Activated T-helper 2 cell treated with anti-CD3 and anti-CD28 coated beads, Interferon-gamma antibody, Interleukin-2, Interleukin-4, amounts not matched to agents 10 μg/mL and 5 μg/mL and 100 μg/mL, durations not matched to agents 14 hours and 24 hours and 36 hours (primary cell): ENCODE measurements at regions of chr16 and their contacts with region 1.

Region 1: DNA sequence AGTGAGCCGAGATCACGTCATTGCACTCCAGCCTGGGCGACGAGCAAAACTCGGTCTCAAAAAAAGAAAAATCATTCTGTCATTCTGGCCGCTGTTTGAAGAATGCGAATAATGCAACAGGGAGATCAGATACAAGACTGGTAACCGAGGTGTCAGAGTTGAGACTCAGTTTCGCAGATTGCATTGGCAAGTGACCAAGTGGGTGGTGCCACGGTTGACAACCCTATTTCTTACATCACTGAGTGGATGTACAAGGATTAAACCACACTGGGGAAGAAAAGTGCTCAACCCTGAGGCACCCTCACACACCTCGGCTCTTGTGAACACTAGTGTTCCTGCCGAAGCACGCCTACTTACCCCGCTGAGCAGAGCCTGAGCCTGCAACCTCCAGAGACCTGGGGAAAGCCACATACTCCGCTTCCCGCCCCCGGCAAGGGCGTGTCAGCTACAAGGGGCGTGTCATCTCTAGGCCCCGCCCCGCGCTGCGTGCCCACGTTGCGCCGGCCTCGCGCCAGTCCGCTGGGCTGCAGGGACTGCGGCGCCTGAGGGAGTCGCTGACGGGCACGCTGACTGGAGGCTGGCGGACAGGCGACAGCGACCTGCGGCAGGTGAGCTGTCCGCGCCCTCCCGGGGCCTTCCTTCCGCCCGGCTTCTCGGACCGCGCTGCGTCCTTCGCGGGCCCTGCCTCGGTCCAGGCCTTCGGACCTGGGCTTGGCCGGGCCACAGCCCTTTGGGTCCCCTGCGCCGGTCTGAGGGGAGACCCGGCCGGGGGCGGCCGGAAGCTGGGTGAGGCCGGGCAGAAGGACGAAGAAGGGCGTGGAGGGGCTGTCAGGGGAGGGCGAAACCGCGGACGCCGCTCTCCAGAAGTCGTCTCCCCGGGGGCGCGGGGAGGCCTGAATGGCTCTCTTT is at the start of gene HMOX2:
- DNase-seq: peak; percentile 94
- H3K4me3 Mint-ChIP-seq: peak within 1 kb of the TSS; percentile 80
- H3K27ac Mint-ChIP-seq: peak within 1 kb of the TSS; percentile 84
- H3K4me1 Mint-ChIP-seq: peaks cover 19% of the 10 kb centered on the region
- H3K27me3 Mint-ChIP-seq: no peaks in the 10 kb centered on the region
- total RNA-seq, gene HMOX2: 70.2 and 75.2 TPM in 2 replicates

Region 2: DNA sequence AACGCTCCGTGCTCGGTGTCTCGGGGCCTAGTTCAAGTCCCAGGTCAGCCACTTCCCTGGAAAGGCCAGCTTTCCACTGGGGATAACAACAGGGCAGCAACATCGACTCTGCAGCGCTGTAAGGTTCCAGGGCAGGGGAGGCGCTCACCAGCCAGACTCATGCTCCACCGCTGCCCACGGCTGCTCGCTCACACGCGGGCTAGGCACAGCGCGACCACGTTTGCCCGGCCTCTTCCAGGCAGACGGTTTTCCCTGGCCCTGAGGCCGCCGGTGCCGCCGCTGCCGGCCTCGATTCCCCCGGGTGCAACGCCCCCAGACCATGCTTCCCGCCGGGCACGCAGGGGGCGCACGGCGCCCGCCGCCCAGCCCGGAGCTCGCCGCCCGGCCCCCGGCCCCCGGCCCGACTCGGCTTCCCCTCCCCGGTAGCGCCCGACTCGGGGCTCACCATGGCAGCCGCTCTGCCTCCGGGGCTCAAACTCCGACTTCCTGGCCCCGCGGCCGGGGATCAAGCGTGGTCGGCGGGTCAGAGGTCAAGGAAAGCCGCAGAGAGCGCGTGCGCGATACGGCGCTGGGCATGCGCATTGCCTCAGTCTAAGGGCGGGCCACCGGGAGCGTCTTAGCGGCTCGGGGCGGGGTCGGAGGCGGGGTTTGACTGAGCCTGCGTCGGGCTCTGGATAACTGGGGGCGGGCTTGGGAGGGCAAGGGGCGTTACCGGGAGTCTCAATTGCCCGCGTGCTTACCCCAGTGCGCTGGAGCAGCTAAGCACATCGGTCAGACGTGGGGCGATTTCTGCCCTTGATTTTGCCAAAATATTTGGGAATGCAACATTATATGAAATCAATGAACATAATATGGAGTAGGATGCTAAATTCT is 125.1 kb before region 1 on chr16 and contains the start of gene PAM16:
- intact Hi-C with region 1: loop called (anchors 5 kb)
- DNase-seq: peak; percentile 98
- H3K4me3 Mint-ChIP-seq: peak within 1 kb of the TSS; percentile 93
- H3K27ac Mint-ChIP-seq: peak within 1 kb of the TSS; percentile 88
- H3K4me1 Mint-ChIP-seq: peaks cover 4% of the 10 kb centered on the region
- H3K27me3 Mint-ChIP-seq: no peaks in the 10 kb centered on the region
- total RNA-seq, gene PAM16: 73.1 and 73.8 TPM in 2 replicates

Region 3: GRCh38 chr16:4416200-4417032 is 59.7 kb before region 1 on chr16 and contains the start of gene CORO7:
- intact Hi-C with region 1: loop called (anchors 2 kb)
- DNase-seq: peak; percentile 98
- H3K4me3 Mint-ChIP-seq: peak within 1 kb of the TSS; percentile 95
- H3K27ac Mint-ChIP-seq: peak within 1 kb of the TSS; percentile 88
- H3K4me1 Mint-ChIP-seq: peaks cover 27% of the 10 kb centered on the region
- H3K27me3 Mint-ChIP-seq: no peaks in the 10 kb centered on the region
- total RNA-seq, gene CORO7: 92.5 and 101 TPM in 2 replicates

Region 4: DNA sequence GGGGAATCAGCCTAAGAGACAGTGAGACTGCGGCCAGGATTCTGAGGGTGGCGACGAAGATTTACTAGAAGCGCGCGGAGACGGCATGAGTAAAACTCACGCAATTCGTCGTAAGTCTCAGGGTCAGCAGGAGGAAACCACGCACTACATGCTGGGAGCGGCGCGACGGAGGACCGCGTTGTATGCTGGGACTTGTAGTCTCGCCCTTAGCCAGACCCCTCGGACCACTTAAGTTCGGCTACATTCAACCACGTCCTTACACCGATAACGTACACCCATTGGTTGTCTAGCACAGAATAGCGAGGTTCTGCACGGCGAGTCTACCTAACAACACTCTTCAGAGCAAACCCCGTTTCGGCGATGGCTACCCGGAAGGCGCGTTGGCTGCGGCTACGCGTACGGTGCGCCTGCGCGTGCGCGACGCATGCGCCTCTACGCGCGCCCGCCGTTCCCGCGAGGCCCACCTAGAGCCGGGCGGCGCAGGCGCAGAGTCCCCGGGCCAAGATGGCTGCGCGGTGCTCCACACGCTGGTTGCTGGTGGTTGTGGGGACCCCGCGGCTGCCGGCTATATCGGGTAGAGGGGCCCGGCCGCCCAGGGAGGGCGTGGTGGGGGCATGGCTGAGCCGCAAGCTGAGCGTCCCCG is 50.6 kb before region 1 on chr16 and contains the start of gene DNAJA3:
- intact Hi-C with region 1: loop called (anchors 2 kb)
- DNase-seq: peak; percentile 91
- H3K4me3 Mint-ChIP-seq: peak within 1 kb of the TSS; percentile 98
- H3K27ac Mint-ChIP-seq: peak within 1 kb of the TSS; percentile 100
- H3K4me1 Mint-ChIP-seq: peaks cover 22% of the 10 kb centered on the region
- H3K27me3 Mint-ChIP-seq: no peaks in the 10 kb centered on the region
- total RNA-seq, gene DNAJA3: 77.1 and 88.4 TPM in 2 replicates

Region 5: DNA sequence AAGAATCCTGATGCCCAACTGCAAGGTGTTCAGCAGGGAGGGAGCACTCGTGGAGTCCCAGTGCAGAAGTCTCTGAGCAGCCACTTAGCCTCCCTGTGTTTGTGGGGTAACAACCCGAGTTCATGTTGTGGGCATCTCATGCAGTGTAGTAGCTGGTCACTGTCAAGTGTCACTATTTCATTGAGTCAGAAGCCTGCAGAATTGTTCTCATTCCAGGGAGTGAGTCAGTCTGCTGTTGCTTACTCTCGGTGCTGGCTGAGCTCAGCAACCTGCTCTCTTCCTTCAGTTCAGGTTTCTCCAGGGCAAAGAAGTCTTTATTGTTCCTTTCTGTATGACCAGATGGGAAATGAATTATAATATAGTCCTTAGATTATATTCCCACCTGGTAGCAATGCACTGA is 24.1 kb after region 1 on chr16:
- intact Hi-C with region 1: loop called (anchors 2 kb)
- DNase-seq: no peak
- H3K4me3 Mint-ChIP-seq: no peak overlapping the region
- H3K27ac Mint-ChIP-seq: no peak overlapping the region
- H3K4me1 Mint-ChIP-seq: peaks cover 50% of the 10 kb centered on the region
- H3K27me3 Mint-ChIP-seq: no peaks in the 10 kb centered on the region

Region 6: DNA sequence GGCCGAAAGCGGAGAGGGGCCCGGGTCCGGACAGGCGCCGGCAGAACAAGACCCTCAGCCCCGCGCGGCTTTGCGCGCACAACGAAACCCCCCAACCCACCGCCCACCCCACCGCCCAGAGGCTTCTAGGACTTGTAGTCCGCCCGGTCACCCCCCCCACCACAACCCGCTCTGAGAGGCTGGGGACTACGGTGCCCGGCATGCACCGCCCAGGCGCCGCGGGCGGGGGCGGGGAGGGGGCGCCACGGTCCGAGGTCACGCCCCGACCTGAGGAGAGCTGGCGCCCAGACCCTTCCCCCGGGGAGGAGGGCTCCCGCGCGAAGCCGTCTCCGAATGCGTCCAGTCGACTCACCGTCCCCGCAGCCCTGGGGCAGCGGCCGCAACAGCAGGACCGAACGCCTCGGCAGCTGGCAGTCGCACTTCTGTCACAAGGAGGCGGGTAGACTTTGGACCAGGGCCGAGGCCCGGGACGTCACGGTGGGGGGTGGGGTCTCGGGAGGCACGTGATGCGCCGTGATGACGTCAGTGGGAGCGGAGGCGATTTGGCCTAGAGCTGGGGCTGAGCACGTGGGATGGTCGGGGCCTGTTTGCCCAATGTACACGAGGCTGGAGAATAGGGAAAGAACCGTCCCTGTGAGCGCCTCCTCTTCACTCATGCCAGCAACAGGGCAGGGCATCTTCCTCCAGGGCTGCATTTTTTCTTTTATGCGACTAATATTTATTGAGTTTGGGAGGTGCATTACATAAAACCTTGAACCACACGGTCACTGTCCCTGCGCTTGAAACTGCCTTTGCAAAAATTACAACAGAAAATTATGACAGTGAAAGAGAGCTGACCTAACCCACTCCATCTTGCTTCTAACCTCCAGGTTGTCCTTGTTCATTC is 62.5 kb after region 1 on chr16 and contains the start of gene CDIP1:
- intact Hi-C with region 1: loop called (anchors 2 kb)
- DNase-seq: peak; percentile 87
- H3K4me3 Mint-ChIP-seq: peak within 1 kb of the TSS; percentile 80
- H3K27ac Mint-ChIP-seq: peak within 1 kb of the TSS; percentile 72
- H3K4me1 Mint-ChIP-seq: peaks cover 38% of the 10 kb centered on the region
- H3K27me3 Mint-ChIP-seq: no peaks in the 10 kb centered on the region
- total RNA-seq, gene CDIP1: 46.0 and 47.9 TPM in 2 replicates

Region 7: DNA sequence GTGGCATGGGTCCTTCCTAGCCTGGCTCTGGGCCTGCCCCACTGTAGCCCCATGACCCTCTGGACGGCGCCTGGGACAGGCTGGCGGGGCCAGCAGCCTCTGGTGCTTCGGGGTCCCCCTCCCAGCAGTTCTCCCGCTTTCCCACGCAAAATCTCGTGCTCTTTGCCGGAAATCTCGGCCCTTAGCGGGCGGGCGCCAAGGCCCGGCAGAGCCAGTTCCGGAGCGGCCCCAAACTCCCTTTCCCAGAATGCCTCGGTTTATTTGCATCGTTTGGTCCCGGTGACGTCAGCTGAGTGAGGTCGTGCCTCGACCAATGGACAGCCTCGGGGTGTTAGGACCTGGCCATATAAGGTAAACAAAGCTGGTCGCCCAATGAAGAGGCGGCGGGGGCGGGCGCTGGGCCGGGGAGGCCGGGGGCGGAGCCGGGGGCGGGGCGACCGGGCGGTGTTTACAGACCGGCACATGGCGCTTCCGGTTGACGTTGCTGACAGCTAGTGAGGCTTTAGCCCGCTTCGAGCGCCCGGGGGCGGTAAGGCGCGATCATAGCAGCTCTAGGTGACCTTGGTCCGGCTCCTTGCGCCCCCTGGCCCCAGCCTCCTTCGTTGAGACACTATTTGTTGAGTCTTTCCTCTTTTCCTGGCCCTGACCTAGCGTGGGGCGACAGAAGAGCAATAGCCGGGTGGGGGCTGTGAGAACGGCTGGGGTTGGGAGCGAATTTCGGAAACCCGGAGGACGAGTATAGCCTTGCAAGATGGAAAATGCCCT is 140.1 kb after region 1 on chr16:
- intact Hi-C with region 1: loop called (anchors 5 kb)
- DNase-seq: peak; percentile 99
- H3K4me3 Mint-ChIP-seq: peak overlapping the region; percentile 92
- H3K27ac Mint-ChIP-seq: peak overlapping the region; percentile 98
- H3K4me1 Mint-ChIP-seq: peaks cover 16% of the 10 kb centered on the region
- H3K27me3 Mint-ChIP-seq: no peaks in the 10 kb centered on the region

Region 8: DNA sequence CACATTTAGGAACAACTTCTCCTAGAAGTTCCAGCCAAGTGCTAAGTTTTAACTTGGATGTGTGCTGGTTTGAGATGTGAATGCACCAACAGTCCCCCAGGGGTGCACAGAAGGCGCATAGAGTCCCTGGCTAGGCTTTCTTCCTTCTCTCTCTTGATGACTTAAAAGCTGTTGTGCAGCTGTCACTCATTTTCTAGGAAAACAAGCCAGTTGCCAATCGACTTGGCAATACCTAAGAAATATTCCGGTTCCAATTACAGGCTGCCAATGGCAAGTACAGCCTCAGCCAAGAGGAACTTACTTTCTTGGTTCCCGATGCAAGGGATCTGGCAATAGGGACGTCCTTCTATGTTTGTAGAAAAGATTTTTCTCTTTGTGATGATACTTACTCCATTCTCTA is 888.1 kb after region 1 on chr16:
- intact Hi-C with region 1: no loop called
- DNase-seq: no peak
- H3K4me3 Mint-ChIP-seq: no peak overlapping the region
- H3K27ac Mint-ChIP-seq: no peak overlapping the region
- H3K4me1 Mint-ChIP-seq: no peaks in the 10 kb centered on the region
- H3K27me3 Mint-ChIP-seq: no peaks in the 10 kb centered on the region